ENCODE measurements at regions of chr2 and their contacts with region 1.

Region 1: GRCh38 chr2:137838255-137839092 is 125.8 kb upstream of the HNMT start:
- DNase-seq: peak in 1 of 4 donors; percentile 8
- ATAC-seq: peak; percentile 68
- H3K4me3 ChIP-seq: no peak overlapping the region
- H3K27ac ChIP-seq: no peak overlapping the region
- H3K4me1 ChIP-seq: no peaks in the 10 kb centered on the region
- H3K27me3 ChIP-seq: no peaks in the 10 kb centered on the region
- CTCF ChIP-seq: peak; percentile 54 to 77 (median 68)
- POLR2A ChIP-seq: no peak

Region 2: DNA sequence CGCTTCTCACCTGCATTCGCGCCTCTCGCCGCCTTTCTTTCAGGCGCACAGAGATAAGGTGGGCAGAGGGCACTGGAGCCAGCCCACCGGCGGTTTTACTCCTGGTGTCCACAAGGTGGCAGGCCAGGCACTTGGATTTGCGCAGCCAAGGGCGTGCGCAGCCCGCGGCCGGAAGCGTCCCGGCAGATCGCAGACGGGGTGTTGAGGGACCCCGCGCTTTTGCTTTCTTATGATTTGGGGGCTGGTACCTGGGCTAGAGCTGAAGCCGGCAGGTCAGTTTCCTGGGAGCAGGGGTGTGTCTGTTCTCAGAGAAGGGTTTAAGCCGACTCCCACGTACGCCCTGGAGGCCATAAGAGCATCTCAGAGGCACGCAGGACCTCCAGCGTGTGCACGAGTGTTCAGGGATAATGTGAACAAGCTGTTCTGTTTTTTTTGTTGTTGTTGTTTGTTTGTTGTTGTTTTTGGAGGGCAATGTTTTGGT is 1414.9 kb before region 1 on chr2:
- intact Hi-C with region 1: loop called (anchors 10 kb)
- DNase-seq: peak; percentile 65 to 78 (median 74)
- ATAC-seq: peak; percentile 89
- H3K4me3 ChIP-seq: no peak overlapping the region
- H3K27ac ChIP-seq: no peak overlapping the region
- H3K4me1 ChIP-seq: peaks cover 8% of the 10 kb centered on the region
- H3K27me3 ChIP-seq: no peaks in the 10 kb centered on the region
- CTCF ChIP-seq: peak; percentile 75 to 89 (median 84)
- POLR2A ChIP-seq: no peak